Dendritic cell treated with granulocyte-macrophage colony-stimulating factor and Interleukin-4, amounts not matched to agents 40 ng/mL and 50 ng/mL, for 4 days (primary cell): ENCODE measurements at regions of chr20 and their contacts with region 1.

Region 1: GRCh38 chr20:41173161-41173721 is 35.9 kb downstream of the PLCG1 start:
- H3K4me3 Mint-ChIP-seq: no peak overlapping the region
- H3K27ac Mint-ChIP-seq: no peak overlapping the region
- H3K4me1 Mint-ChIP-seq: no peaks in the 10 kb centered on the region
- H3K27me3 Mint-ChIP-seq: peaks cover 30% of the 10 kb centered on the region

Region 2: GRCh38 chr20:41232973-41233926 is 60.0 kb after region 1 on chr20:
- intact Hi-C with region 1: loop called (anchors 1 kb)
- H3K4me3 Mint-ChIP-seq: no peak overlapping the region
- H3K27ac Mint-ChIP-seq: peak overlapping the region; percentile 4
- H3K4me1 Mint-ChIP-seq: peaks cover 17% of the 10 kb centered on the region
- H3K27me3 Mint-ChIP-seq: no peaks in the 10 kb centered on the region

Region 3: DNA sequence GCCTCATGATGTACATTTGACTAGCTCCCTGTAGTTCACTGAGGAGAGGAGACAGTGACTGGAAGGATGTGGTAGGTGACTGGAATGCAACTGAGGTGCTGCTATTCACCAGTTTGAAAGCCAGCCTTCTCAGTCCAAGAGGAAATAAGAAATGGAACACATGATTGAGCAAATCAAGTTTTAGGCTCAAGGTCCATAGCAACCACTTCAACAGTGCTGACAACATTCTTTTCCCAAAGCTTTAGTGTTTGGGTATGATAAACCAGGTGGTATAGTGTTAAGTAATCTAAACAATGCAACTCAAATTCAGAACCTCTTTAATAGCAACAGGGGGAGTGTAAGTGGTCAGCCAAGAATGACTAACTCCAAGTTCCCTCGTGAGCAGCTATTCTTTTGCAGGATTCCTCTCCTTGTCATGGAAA is 135.1 kb after region 1 on chr20:
- intact Hi-C with region 1: no loop called
- H3K4me3 Mint-ChIP-seq: no peak overlapping the region
- H3K27ac Mint-ChIP-seq: no peak overlapping the region
- H3K4me1 Mint-ChIP-seq: peaks cover 19% of the 10 kb centered on the region
- H3K27me3 Mint-ChIP-seq: no peaks in the 10 kb centered on the region

Region 4: DNA sequence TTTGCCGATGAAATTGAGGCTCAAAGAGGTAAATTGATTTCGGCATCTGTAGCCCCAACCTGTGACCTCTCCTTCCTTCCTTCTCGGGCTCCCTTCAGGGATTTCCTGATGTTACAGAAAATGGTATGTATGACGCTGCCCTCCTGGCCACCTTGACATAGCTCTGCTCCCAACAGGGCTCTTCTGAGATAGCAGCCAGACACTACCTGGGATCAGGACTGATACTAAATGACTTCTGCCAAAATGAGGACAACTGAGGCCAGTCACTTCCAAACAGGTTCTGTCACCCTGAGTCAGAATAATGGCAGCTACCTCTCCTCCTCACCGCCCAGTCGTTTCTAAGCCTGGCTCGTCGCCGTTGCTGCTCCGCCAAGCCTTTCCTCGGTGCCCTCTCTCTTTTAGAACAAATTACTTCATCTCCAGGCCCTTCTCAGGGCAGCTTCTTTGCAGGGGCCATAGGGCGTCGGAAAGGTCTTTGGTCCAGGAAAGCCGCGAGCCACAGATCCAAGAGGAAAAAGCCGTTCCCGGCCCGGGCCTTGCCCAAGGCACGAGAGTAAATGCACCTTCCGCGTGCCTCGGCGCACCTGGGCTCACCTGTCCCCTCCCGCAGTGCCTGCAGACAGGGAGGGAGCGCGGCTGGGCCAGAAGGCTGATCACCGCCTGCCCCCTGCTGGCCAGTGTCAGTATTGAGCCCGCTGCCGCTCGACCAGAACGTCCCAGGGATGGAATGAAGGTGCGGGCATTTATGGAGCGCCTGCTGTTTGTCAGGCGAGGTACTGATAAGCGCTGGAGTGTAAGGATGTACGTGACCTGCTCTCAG is 166.5 kb after region 1 on chr20:
- intact Hi-C with region 1: loop called (anchors 1 kb)
- H3K4me3 Mint-ChIP-seq: peak overlapping the region; percentile 76
- H3K27ac Mint-ChIP-seq: peak overlapping the region; percentile 61
- H3K4me1 Mint-ChIP-seq: peaks cover 9% of the 10 kb centered on the region
- H3K27me3 Mint-ChIP-seq: peaks cover 51% of the 10 kb centered on the region

Region 5: GRCh38 chr20:42986143-42986773 is 1813.0 kb after region 1 on chr20:
- intact Hi-C with region 1: no loop called
- H3K4me3 Mint-ChIP-seq: no peak overlapping the region
- H3K27ac Mint-ChIP-seq: no peak overlapping the region
- H3K4me1 Mint-ChIP-seq: no peaks in the 10 kb centered on the region
- H3K27me3 Mint-ChIP-seq: no peaks in the 10 kb centered on the region